ENCODE measurements at regions of chr10 and their contacts with region 1.

Region 1: DNA sequence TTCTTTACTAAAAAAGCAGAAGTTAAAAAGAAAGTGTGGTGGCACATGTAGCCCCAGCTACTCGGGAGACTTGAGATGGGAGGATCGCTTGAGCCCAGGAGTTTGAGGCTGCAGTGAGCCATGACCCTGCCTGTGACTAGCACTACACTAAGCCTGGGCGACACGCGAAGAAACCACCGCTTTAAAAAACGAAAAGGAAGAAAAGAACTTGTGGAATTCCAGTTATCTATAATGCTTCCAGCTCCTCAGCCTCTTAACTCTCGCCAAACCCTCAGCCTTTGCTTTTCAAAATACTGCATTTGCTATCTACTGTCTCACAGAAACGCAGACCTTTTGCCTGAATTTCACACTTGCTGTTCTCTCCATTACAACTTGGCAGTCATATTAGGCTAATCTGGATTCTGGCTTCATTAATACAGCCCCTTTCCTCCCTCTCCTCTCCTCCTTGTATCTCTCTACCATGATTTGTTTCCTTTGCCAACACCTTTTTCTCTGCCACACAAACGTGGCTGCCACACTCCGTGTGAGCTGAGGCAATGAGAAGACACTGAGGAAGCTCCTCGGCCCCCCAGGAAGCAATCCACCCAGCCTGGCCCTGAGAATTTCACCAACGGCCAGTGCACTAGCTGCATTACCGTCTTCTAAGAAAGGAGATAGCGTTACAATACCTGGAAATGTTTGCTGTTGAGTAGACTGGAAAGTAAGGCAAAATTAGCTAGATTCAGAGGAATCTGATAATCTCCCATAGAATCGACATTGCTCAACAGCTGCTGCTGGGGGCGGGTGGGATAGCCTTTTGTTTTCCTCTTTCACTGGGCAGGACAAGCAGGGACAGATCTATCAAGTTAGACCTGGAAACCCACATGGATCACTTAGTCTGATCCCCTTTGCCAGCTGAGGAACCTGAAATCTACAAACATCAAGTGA is 37.2 kb downstream of the CALML5 start:
- DNase-seq: peak in 2 of 3 donors; percentile 56 to 67
- H3K4me3 ChIP-seq: no peak overlapping the region
- H3K27ac ChIP-seq: peak overlapping the region in 1 of 2 experiments; percentile 76
- H3K4me1 ChIP-seq: peaks cover 0 to 15% (median 11%) of the 10 kb centered on the region in 4 experiments
- H3K27me3 ChIP-seq: no peaks in the 10 kb centered on the region

Region 2: GRCh38 chr10:5396556-5397300 is 65.4 kb before region 1 on chr10:
- CTCF ChIA-PET with region 1: no interaction called
- POLR2A ChIA-PET with region 1: no interaction called
- DNase-seq: no peak
- H3K4me3 ChIP-seq: no peak overlapping the region
- H3K27ac ChIP-seq: no peak overlapping the region
- H3K4me1 ChIP-seq: no peaks in the 10 kb centered on the region
- H3K27me3 ChIP-seq: no peaks in the 10 kb centered on the region

Region 3: GRCh38 chr10:5412277-5412941 is 49.8 kb before region 1 on chr10 and contains the start of gene NET1:
- CTCF ChIA-PET with region 1: no interaction called
- POLR2A ChIA-PET with region 1: no interaction called
- DNase-seq: peak; percentile 80 to 82 (median 82)
- H3K4me3 ChIP-seq: peak within 1 kb of the TSS; percentile 71 to 93 (median 84)
- H3K27ac ChIP-seq: peak within 1 kb of the TSS in 1 of 2 experiments; percentile 64
- H3K4me1 ChIP-seq: peaks cover 0 to 13% (median 9%) of the 10 kb centered on the region in 4 experiments
- H3K27me3 ChIP-seq: no peaks in the 10 kb centered on the region

Region 4: DNA sequence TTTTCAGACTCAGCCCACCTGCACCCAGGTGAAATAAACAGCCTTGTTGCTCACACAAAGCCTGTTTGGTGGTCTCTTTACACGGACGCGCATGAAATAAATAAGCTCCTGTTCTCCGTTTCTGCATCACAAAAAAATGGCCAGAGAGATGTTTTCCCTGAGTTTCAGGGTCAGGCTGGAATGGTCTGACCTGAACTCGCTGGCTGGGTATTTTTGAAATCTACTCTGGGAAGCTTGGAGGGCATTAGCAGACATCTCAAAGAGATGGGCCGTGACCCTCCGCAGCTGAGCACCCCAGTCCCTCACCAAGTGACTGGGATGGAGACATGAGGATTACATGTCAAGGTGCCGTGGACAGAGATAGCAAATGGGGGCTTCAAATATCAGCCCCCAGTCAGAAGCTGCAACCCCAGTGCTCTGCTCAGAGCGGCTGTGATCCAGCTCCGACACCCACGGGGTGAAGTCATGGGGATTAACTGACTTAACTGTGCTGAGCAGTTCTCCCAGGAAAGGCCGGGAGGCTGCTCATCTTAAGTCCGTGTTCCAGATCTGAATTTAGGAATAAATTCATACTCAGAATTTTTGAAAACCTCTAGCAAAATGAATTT is 14.8 kb after region 1 on chr10:
- CTCF ChIA-PET with region 1: interaction called, 15 read pairs
- POLR2A ChIA-PET with region 1: interaction called, 3 read pairs
- DNase-seq: no peak
- H3K4me3 ChIP-seq: no peak overlapping the region
- H3K27ac ChIP-seq: peak overlapping the region in 1 of 2 experiments; percentile 89
- H3K4me1 ChIP-seq: peaks cover 0 to 31% (median 17%) of the 10 kb centered on the region in 4 experiments
- H3K27me3 ChIP-seq: no peaks in the 10 kb centered on the region